Posterior vena cava (tissue), 2 donors: ENCODE measurements at regions of chr3 and their contacts with region 1.

Region 1: DNA sequence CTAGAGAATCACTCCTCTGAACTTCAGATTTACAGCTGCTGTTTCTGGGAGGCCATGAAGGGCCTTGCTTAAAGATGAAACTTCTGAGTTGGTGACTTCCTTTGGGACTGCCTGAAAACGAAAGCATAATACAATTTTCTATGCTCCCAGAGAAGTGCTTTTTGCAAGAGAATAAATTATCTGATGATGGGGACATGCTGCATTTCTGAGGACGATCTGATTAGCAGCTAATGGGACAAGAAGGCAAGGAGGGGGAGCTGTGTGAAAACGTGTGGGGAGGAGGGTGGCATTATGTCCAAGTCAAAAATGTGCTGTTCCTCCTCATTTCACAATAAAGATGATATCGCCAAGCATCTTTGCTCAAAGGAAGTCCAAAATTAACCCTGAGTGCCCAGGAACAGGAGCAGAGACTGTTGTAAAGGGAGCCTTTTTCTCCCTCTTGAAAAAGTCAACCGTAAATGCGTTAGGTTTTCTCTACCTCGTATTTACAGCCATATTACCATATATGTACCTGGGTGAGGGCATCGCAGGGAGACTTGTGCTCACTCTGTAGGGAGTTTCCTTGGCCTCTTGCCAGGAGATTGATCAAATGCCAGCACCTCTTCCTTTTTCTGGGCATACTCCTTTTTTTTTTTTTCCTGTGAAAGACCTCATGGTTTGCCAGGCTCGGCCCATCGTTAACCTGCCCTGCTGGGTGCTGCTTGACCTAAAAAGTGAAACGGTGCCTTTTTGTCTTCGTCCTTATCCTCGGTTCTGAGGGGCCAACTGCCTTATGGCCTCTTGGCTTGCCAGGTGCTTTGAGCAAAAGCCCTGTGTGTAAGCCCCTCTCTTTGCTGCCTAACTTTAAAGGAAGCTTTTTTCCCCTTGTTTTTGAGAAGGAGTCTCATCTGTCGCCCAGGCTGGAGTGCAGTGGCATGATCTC is 11.5 kb downstream of the ITPR1 start:
- DNase-seq: no peak

Region 2: GRCh38 chr3:2810723-2811122 is 1693.9 kb before region 1 on chr3:
- intact Hi-C with region 1: loop called in 1 of 2 experiments (anchors 5 kb)
- DNase-seq: no peak